ENCODE measurements at regions of chr2 and their contacts with region 1.

Region 1: GRCh38 chr2:189164746-189165145 is 14.8 kb downstream of the COL5A2 start:
- DNase-seq: no peak
- ATAC-seq: peak; percentile 58; the same call in 1 of the 2 replicates
- H3K4me3 ChIP-seq: no peak overlapping the region
- H3K27ac ChIP-seq: peak overlapping the region; percentile 86
- H3K4me1 ChIP-seq: peaks cover 74% of the 10 kb centered on the region
- H3K27me3 ChIP-seq: no peaks in the 10 kb centered on the region
- CTCF ChIP-seq: no peak

Region 2: GRCh38 chr2:189153619-189154018 is 11.1 kb before region 1 on chr2:
- CTCF ChIA-PET with region 1: no interaction called
- POLR2A ChIA-PET with region 1: interaction called, 16 read pairs
- in situ Hi-C with region 1: no loop called
- intact Hi-C with region 1: no loop called
- DNase-seq: no peak
- ATAC-seq: no peak
- H3K4me3 ChIP-seq: no peak overlapping the region
- H3K27ac ChIP-seq: peak overlapping the region; percentile 89
- H3K4me1 ChIP-seq: peaks cover 58% of the 10 kb centered on the region
- H3K27me3 ChIP-seq: no peaks in the 10 kb centered on the region
- CTCF ChIP-seq: no peak

Region 3: GRCh38 chr2:189762551-189763298 is 598.0 kb after region 1 on chr2 and contains the start of gene OSGEPL1:
- CTCF ChIA-PET with region 1: no interaction called
- POLR2A ChIA-PET with region 1: no interaction called
- in situ Hi-C with region 1: no loop called
- intact Hi-C with region 1: no loop called
- DNase-seq: peak; percentile 88
- ATAC-seq: peak; percentile 99
- H3K4me3 ChIP-seq: peak within 1 kb of the TSS; percentile 82 to 90
- H3K27ac ChIP-seq: peak within 1 kb of the TSS; percentile 99
- H3K4me1 ChIP-seq: peaks cover 11% of the 10 kb centered on the region; the same call in 1 of the 2 replicates
- H3K27me3 ChIP-seq: no peaks in the 10 kb centered on the region
- CTCF ChIP-seq: peak; percentile 73
- total RNA-seq, gene OSGEPL1: 6.3 TPM

Measured in Panc1 (cell line).